Calu3 (cell line): ENCODE measurements at regions of chr12 and their contacts with region 1.

Region 1: DNA sequence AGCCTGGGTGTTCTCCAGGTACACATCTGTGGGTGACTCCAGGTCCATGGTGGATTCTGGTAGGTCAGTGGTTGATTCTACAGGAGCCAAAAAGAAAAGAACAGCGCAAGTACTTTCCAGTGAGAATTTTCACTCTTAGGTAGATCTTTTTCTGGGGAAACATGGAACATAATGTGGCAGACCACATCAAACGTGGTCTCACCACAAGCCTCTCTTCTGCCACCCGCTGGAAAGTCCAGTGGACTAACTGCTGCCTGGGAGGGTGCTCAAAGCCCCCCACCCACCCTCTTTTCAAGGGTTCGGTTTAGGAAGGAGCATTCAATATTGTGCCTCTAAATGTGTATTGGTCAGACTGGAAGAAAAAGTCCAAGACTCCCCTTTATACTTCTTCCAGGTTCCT is 36.1 kb upstream of the PRB2 start:
- DNase-seq: no peak
- H3K4me3 Mint-ChIP-seq: no peak overlapping the region
- H3K27ac Mint-ChIP-seq: no peak overlapping the region
- H3K4me1 Mint-ChIP-seq: no peaks in the 10 kb centered on the region
- H3K27me3 Mint-ChIP-seq: peaks cover 88% of the 10 kb centered on the region
- CTCF ChIP-seq: no peak

Region 2: GRCh38 chr12:10989107-10989506 is 442.4 kb before region 1 on chr12:
- CTCF ChIA-PET with region 1: no interaction called
- intact Hi-C with region 1: no loop called
- DNase-seq: no peak
- H3K4me3 Mint-ChIP-seq: no peak overlapping the region
- H3K27ac Mint-ChIP-seq: no peak overlapping the region
- H3K4me1 Mint-ChIP-seq: no peaks in the 10 kb centered on the region
- H3K27me3 Mint-ChIP-seq: no peaks in the 10 kb centered on the region
- CTCF ChIP-seq: no peak

Region 3: DNA sequence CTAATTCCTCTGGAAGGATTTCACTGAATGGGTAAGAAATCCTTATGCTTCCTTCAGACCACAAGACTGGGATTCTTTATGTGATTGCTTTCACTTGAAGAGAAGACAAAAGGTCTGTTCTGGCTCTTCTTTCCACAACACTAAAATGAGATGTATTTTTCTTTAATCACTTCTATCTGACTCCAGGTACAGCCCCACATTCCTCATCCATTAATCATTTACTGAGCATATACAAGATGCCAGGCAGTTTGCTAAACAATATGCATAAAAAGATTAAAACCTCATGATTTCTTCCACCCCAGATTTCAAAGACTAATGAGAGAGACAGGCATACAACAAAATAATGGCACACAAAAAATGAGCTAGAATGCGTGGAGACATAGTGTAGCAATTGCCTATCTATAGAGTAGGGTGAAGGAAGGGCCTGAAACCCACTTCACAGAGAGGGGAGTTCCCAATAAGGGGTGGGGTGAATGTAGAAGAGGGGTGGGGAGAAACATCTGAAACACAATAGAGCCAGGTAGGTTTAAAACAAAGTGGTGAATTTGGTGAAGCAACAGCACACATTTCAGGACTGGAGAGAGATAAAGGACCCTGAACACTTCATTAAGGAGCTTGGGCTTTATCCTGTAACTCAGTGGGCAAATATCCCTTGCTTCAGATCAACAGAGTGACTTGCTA is 29.0 kb after region 1 on chr12:
- CTCF ChIA-PET with region 1: no interaction called
- intact Hi-C with region 1: loop called (anchors 1 kb)
- DNase-seq: no peak
- H3K4me3 Mint-ChIP-seq: no peak overlapping the region
- H3K27ac Mint-ChIP-seq: no peak overlapping the region
- H3K4me1 Mint-ChIP-seq: peaks cover 21% of the 10 kb centered on the region
- H3K27me3 Mint-ChIP-seq: peaks cover 24% of the 10 kb centered on the region
- CTCF ChIP-seq: no peak